ENCODE measurements at regions of chr2 and their contacts with region 1.

Region 1: GRCh38 chr2:195656859-195657633 is at the start of gene SLC39A10:
- DNase-seq: peak; percentile 97
- ATAC-seq: peak; percentile 84
- H3K4me3 Mint-ChIP-seq: peak within 1 kb of the TSS; percentile 98
- H3K27ac Mint-ChIP-seq: peak within 1 kb of the TSS; percentile 99
- H3K4me1 Mint-ChIP-seq: peaks cover 64% of the 10 kb centered on the region
- H3K27me3 Mint-ChIP-seq: no peaks in the 10 kb centered on the region
- CTCF ChIP-seq: no peak
- total RNA-seq, gene SLC39A10: 45.7 and 52.3 TPM in 2 replicates

Region 2: DNA sequence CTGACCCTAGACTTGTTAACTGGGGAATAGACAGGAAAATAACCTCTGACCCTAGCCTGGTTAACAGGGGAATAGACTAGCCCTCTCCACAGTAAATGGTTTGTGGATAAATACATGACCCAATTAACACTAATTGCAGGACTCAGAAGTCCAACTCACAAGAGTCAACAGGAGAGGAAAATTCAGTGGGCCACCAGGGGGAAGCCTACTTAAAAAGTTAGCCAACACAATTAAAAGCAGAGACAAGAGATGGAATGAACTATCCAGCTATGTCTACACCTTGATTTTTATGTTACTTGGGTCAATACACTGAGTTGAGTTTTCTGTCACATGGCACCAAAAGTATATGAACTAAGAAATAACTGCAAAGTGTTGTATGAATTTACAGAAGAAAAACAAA is 158.9 kb before region 1 on chr2:
- CTCF ChIA-PET with region 1: interaction called, 123 read pairs
- POLR2A ChIA-PET with region 1: interaction called, 65 read pairs
- intact Hi-C with region 1: loop called (anchors 1 kb)
- DNase-seq: peak; percentile 22
- ATAC-seq: peak; percentile 66
- H3K4me3 Mint-ChIP-seq: no peak overlapping the region
- H3K27ac Mint-ChIP-seq: no peak overlapping the region
- H3K4me1 Mint-ChIP-seq: peaks cover 18% of the 10 kb centered on the region
- H3K27me3 Mint-ChIP-seq: no peaks in the 10 kb centered on the region
- CTCF ChIP-seq: no peak

Region 3: GRCh38 chr2:195586062-195586714 is 70.9 kb before region 1 on chr2:
- CTCF ChIA-PET with region 1: interaction called, 19 read pairs
- POLR2A ChIA-PET with region 1: interaction called, 144 read pairs
- intact Hi-C with region 1: no loop called
- DNase-seq: no peak
- ATAC-seq: no peak
- H3K4me3 Mint-ChIP-seq: no peak overlapping the region
- H3K27ac Mint-ChIP-seq: no peak overlapping the region
- H3K4me1 Mint-ChIP-seq: peaks cover 1% of the 10 kb centered on the region
- H3K27me3 Mint-ChIP-seq: no peaks in the 10 kb centered on the region
- CTCF ChIP-seq: no peak

Region 4: DNA sequence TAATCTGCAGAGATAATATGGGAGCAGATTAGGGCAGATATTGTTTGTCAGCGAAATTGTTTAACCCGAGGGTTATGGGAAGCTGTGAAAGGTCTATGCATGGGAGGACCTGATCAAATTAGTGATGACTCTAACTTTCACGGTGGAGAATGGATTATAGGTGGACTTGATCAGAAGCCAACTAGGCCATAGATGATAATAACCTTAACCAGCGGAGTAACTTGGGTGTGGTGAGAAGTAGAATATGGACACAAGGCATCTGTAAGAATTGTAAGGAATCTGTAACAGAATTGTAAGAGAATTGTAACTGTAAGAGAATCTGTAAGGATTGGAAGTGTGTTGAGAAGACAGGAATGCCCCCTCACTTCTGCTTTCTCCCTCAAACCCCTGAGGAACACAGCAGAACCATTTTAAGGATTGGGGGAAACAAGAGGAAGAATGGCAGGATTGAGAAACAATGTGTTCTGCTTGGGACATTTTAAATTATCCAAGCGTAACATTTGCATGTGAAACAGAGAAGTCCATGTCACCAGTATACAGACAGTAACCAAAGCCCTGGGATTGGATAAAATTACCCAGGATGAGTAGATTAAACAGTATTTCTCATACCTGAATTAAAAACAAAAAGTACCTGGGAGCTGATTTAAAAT is 14.9 kb before region 1 on chr2:
- CTCF ChIA-PET with region 1: interaction called, 5 read pairs
- POLR2A ChIA-PET with region 1: interaction called, 18 read pairs
- intact Hi-C with region 1: no loop called
- DNase-seq: no peak
- ATAC-seq: no peak
- H3K4me3 Mint-ChIP-seq: no peak overlapping the region
- H3K27ac Mint-ChIP-seq: no peak overlapping the region
- H3K4me1 Mint-ChIP-seq: peaks cover 29% of the 10 kb centered on the region
- H3K27me3 Mint-ChIP-seq: no peaks in the 10 kb centered on the region
- CTCF ChIP-seq: no peak

Region 5: GRCh38 chr2:196639180-196640030 is 982.4 kb after region 1 on chr2 and contains the start of gene CCDC150:
- CTCF ChIA-PET with region 1: interaction called, 3 read pairs
- POLR2A ChIA-PET with region 1: no interaction called
- intact Hi-C with region 1: loop called (anchors 10 kb)
- DNase-seq: peak; percentile 90
- ATAC-seq: peak; percentile 100
- H3K4me3 Mint-ChIP-seq: peak within 1 kb of the TSS; percentile 89
- H3K27ac Mint-ChIP-seq: peak within 1 kb of the TSS; percentile 53
- H3K4me1 Mint-ChIP-seq: peaks cover 14% of the 10 kb centered on the region
- H3K27me3 Mint-ChIP-seq: no peaks in the 10 kb centered on the region
- CTCF ChIP-seq: no peak
- total RNA-seq, gene CCDC150: 2.3 and 2.6 TPM in 2 replicates